ENCODE measurements at regions of chr17 and their contacts with region 1.

Region 1: GRCh38 chr17:28324267-28324745 is 5.3 kb downstream of the TMEM97 start:
- DNase-seq: no peak
- H3K4me3 ChIP-seq: no peak overlapping the region
- H3K4me3 Mint-ChIP-seq: no peak overlapping the region
- H3K27ac ChIP-seq: peak overlapping the region in 1 of 2 donors; percentile 36
- H3K27ac Mint-ChIP-seq: peak overlapping the region in 4 of 7 donors; percentile 41 to 78 (median 59)
- H3K4me1 ChIP-seq: peaks cover 24 to 29% of the 10 kb centered on the region in 2 donors
- H3K4me1 Mint-ChIP-seq: peaks cover 28% of the 10 kb centered on the region
- H3K27me3 ChIP-seq: no peaks in the 10 kb centered on the region
- H3K27me3 Mint-ChIP-seq: no peaks in the 10 kb centered on the region
- CTCF ChIP-seq: no peak

Region 2: GRCh38 chr17:28357061-28357900 is 33.0 kb after region 1 on chr17 and contains the start of gene POLDIP2:
- intact Hi-C with region 1: loop called in 1 of 2 experiments (anchors 5 kb)
- DNase-seq: peak; percentile 94 to 95 (median 94)
- H3K4me3 ChIP-seq: peak within 1 kb of the TSS; percentile 82 to 93 (median 88)
- H3K4me3 Mint-ChIP-seq: peak within 1 kb of the TSS; percentile 90 to 96
- H3K27ac ChIP-seq: peak within 1 kb of the TSS; percentile 70 to 92
- H3K27ac Mint-ChIP-seq: peak within 1 kb of the TSS; percentile 90 to 99 (median 95)
- H3K4me1 ChIP-seq: peaks cover 19 to 23% of the 10 kb centered on the region in 2 donors
- H3K4me1 Mint-ChIP-seq: peaks cover 20% of the 10 kb centered on the region
- H3K27me3 ChIP-seq: no peaks in the 10 kb centered on the region
- H3K27me3 Mint-ChIP-seq: no peaks in the 10 kb centered on the region
- CTCF ChIP-seq: no peak
- polyA plus RNA-seq, gene POLDIP2: 31.5 to 76.9 (median 72.4) TPM